ENCODE measurements at regions of chr13 and their contacts with region 1.

Region 1: DNA sequence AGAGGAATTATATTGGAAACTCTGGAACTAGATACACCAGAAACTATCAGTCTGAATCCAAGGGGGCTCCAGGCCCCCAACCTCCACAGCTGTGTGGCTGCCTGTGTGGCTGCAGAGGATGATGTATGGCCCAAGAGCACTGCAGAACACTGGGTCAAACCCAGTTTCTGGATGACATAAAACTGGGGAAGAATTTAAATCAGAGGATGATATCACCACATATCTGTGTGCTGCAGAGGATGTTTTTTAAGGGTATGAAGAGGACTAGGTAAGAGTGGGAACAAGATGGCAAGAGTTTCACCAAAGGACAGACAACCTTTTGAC is 226.4 kb downstream of the SUCLA2 start:
- DNase-seq: no peak
- ATAC-seq: no peak
- H3K4me3 ChIP-seq: no peak overlapping the region
- H3K27ac ChIP-seq: no peak overlapping the region
- H3K4me1 ChIP-seq: no peaks in the 10 kb centered on the region
- H3K27me3 ChIP-seq: no peaks in the 10 kb centered on the region

Region 2: DNA sequence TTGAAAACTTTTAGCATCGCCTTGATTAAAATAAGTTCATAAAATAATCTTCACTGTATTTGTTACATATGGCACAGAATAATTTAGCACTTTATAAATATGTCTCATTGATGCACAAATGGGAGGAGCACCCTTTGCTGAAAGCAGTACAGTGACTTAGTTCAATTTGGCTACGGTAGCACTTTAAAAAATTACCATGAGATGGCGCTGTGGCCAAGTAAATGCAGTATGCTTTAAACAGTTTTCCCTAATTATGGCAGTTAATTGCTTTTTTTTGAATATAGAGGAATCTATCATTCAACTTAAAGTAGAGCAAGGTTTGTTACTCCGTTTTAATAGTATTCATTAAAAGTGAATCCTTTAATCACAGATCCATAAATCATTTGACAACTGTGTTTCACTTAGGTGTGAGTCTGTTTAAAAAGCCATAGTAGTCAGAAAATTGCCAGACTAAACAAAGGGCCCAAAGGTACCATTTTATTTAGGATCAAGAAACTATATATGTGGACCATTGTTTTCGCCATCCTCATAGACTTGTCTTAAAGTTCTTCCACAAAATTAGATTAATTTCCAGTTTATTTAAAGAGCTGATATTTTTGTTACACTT is 942.9 kb before region 1 on chr13:
- intact Hi-C with region 1: loop called in 3 of 4 experiments (anchors 5 to 10 kb)
- DNase-seq: peak in 1 of 3 donors; percentile 22
- ATAC-seq: no peak
- H3K4me3 ChIP-seq: no peak overlapping the region
- H3K27ac ChIP-seq: no peak overlapping the region
- H3K4me1 ChIP-seq: no peaks in the 10 kb centered on the region
- H3K27me3 ChIP-seq: no peaks in the 10 kb centered on the region

Region 3: GRCh38 chr13:47415048-47415447 is 359.6 kb before region 1 on chr13:
- intact Hi-C with region 1: loop called in 3 of 4 experiments (anchors 5 to 10 kb)
- DNase-seq: no peak
- ATAC-seq: no peak
- H3K4me3 ChIP-seq: no peak overlapping the region
- H3K27ac ChIP-seq: no peak overlapping the region
- H3K4me1 ChIP-seq: no peaks in the 10 kb centered on the region
- H3K27me3 ChIP-seq: no peaks in the 10 kb centered on the region

Region 4: DNA sequence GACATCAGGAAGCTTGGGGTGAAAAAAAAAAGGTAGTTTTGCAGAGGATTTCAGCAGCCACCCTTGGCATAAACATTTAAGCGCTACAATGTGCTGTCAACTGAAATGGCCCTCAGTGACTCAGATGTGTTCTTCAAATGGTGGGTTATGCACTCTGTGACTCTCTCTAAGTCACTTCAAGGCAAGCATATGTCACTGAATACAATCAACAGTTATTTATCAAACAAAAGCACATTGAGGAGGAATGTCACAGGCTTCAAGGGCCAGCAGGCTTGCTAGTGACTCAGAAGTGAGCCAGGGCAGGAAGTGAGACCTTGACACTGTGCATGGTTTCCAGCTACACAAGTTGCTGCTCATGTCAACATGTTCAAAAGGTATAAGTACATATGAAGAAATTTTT is 354.1 kb before region 1 on chr13:
- intact Hi-C with region 1: loop called in 3 of 4 experiments (anchors 5 to 10 kb)
- DNase-seq: no peak
- ATAC-seq: peak in 1 of 2 donors; percentile 50
- H3K4me3 ChIP-seq: no peak overlapping the region
- H3K27ac ChIP-seq: no peak overlapping the region
- H3K4me1 ChIP-seq: no peaks in the 10 kb centered on the region
- H3K27me3 ChIP-seq: no peaks in the 10 kb centered on the region

Region 5: GRCh38 chr13:47426126-47426849 is 348.3 kb before region 1 on chr13:
- intact Hi-C with region 1: loop called in 2 of 4 experiments (anchors 5 to 10 kb)
- DNase-seq: peak in 2 of 3 donors; percentile 38 to 52
- ATAC-seq: peak; percentile 85 to 86
- H3K4me3 ChIP-seq: no peak overlapping the region
- H3K27ac ChIP-seq: no peak overlapping the region
- H3K4me1 ChIP-seq: no peaks in the 10 kb centered on the region
- H3K27me3 ChIP-seq: no peaks in the 10 kb centered on the region

Region 6: GRCh38 chr13:47897426-47898050 is 122.9 kb after region 1 on chr13:
- intact Hi-C with region 1: no loop called
- DNase-seq: no peak
- ATAC-seq: no peak
- H3K4me3 ChIP-seq: no peak overlapping the region
- H3K27ac ChIP-seq: no peak overlapping the region
- H3K4me1 ChIP-seq: no peaks in the 10 kb centered on the region
- H3K27me3 ChIP-seq: no peaks in the 10 kb centered on the region